HepG2 (cell line): ENCODE measurements at regions of chr1 and their contacts with region 1.

Region 1: GRCh38 chr1:32291708-32292492 is at the start of gene HDAC1:
- DNase-seq: peak; percentile 93
- ATAC-seq: peak; percentile 98
- H3K4me3 ChIP-seq: peak within 1 kb of the TSS; percentile 94 to 99 (median 98)
- H3K27ac ChIP-seq: peak within 1 kb of the TSS; percentile 67
- H3K4me1 ChIP-seq: peaks cover 64% of the 10 kb centered on the region
- H3K27me3 ChIP-seq: no peaks in the 10 kb centered on the region; a peak in 1 of 5 replicates
- CTCF ChIP-seq: no peak; the same call in 1 of the 2 replicates
- EP300 ChIP-seq: peak in 1 of 2 experiments; percentile 50; a peak in 2 of 4 replicates
- POLR2A ChIP-seq: peak; percentile 28 to 85; a peak in 3 of 4 replicates
- RAD21 ChIP-seq: 0 out of 2 replicates have a peak, but pooled peaks have one; percentile 10
- total RNA-seq, gene HDAC1: 93.5 and 109 TPM in 2 replicates

Region 2: DNA sequence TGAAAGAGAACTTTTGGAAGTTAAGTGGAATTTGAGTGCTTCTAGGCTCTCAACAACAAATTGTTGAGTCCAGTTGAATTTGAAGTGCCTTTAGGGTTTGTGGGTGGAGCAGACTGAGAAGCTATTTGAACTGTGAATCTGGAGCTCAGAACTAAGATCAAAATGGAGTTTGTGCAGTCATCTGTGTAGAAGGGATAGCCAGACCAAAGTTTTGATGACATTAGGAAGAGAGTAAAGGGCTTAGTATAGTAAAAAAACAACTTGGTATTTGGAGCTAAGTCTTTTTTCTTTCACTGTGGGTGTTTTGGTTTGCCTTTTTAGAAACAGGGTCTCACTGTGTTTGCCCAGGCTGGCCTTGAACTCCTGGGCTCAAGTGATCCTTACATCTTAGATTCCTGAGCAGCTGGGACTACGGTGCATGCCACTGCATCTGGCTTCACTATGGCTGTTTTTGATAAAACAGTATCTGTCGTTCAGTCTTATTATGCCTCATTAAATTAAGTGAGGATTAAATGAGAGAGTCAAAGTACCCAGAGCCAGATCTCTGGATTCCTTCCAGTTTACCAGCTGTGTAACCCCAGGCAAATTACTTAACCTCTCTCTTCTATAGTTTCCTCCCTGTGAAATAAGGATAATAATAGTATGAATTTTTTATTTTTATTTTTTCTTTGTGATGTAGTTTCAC is 20.0 kb after region 1 on chr1:
- CTCF ChIA-PET with region 1: no interaction called
- POLR2A ChIA-PET with region 1: interaction called, 11 read pairs
- in situ Hi-C with region 1: no loop called
- intact Hi-C with region 1: no loop called
- DNase-seq: peak; percentile 34
- ATAC-seq: peak; percentile 75
- H3K4me3 ChIP-seq: no peak overlapping the region; a peak in 1 of 6 replicates
- H3K27ac ChIP-seq: peak overlapping the region; percentile 53
- H3K4me1 ChIP-seq: peaks cover 58% of the 10 kb centered on the region
- H3K27me3 ChIP-seq: no peaks in the 10 kb centered on the region
- CTCF ChIP-seq: no peak
- EP300 ChIP-seq: peak in 1 of 2 experiments; percentile 39; a peak in 1 of 4 replicates
- POLR2A ChIP-seq: no peak
- RAD21 ChIP-seq: no peak

Region 3: DNA sequence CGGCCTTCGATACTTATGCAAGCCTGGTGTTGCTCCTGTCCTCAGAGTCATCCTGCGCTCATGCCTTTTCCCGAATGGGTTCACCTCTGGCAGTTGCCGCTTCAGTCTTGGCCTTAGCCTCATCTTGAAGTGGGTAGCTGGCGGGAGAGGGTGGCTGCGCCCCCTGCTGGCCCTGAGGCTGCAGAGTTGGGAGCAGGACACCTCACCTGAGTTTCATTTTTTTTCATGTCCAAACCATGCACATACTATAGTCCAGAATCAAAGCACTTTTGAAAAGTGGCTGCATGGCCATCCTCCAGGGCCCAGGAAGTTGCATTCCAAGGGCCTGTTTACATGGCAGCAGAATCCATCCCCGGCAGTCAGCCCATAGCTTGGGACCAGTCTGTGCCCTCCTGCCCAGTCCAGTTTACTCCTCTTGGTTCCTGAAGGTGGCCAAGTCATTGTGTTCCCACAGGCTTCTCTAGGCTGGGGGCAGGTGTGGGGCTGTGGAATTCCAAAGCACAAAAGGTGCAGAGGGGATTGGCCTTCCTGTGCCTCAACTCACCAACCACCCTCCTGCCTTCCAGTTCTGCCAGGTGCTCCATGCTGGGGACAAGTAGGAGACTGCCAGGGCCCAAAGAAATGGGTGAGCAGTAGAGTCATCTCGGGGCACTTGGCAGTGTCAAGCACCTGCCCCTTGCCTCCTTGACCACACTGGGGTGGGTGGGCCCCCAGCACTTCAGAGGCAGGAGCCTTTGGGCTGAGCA is 481.3 kb after region 1 on chr1:
- CTCF ChIA-PET with region 1: no interaction called
- POLR2A ChIA-PET with region 1: no interaction called
- in situ Hi-C with region 1: no loop called
- intact Hi-C with region 1: no loop called
- DNase-seq: peak; percentile 53
- ATAC-seq: peak; percentile 79
- H3K4me3 ChIP-seq: no peak overlapping the region
- H3K27ac ChIP-seq: no peak overlapping the region
- H3K4me1 ChIP-seq: no peaks in the 10 kb centered on the region
- H3K27me3 ChIP-seq: no peaks in the 10 kb centered on the region
- CTCF ChIP-seq: peak; percentile 94
- EP300 ChIP-seq: no peak
- POLR2A ChIP-seq: no peak; a peak in 1 of 4 replicates
- RAD21 ChIP-seq: peak; percentile 93